CD4-positive, alpha-beta memory T cell (primary cell): ENCODE measurements at regions of chr14 and their contacts with region 1.

Region 1: DNA sequence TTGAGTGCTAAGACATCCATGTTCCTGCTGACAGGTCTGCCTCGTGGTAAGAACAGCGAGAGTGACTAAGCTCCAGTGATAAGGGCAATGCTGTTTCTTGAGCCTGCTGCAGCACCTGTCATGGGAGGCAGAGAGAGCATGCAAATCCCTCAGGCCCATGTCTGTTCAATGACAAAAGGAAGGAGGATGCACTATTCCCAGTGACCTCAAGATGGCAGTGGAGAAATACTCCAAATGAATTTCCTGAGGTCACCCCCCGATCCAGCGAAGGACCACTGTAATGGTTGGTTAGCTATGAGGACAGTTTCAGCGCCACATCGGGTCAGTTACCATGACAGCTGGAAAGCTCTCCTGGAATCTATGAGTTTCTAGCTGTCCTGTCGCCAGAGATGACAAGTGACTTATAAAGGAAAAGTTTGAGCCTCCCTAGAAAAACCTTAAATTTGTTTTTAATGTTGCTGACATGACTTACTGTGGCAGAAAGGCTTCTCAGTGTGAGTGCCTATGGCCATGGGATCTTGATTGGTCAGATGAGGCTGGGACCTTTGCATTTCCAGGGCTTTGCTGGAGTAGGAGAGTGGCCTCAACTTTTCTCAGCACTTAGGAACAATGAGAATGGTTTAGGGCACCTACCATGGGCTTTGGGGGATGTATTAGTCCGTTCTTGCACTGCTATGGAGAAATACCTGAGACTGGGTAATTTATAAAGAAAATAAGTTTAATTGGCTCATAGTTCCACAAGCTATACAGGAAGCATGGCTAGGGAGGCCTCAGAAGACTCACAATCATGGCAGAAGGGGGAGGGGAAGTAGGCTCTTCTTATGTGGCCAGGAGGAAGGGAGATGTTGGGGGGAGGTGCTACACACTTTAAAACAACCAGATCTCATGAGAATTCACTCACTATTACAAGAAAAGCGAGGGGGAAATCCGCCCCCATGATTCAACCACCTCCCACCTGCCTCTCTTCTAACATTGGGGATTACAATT is 88.0 kb upstream of the TMEM260 start:
- DNase-seq: peak in 4 of 5 donors; percentile 9 to 29 (median 12)
- H3K4me3 ChIP-seq: no peak overlapping the region
- H3K4me3 Mint-ChIP-seq: peak overlapping the region in 5 of 8 donors; percentile 29 to 58 (median 33)
- H3K27ac ChIP-seq: no peak overlapping the region
- H3K27ac Mint-ChIP-seq: no peak overlapping the region
- H3K4me1 ChIP-seq: peaks cover 6% of the 10 kb centered on the region
- H3K4me1 Mint-ChIP-seq: peaks cover 4 to 6% (median 5%) of the 10 kb centered on the region in 4 donors
- H3K27me3 ChIP-seq: no peaks in the 10 kb centered on the region
- H3K27me3 Mint-ChIP-seq: peaks cover 0 to 1% of the 10 kb centered on the region in 2 donors

Region 2: DNA sequence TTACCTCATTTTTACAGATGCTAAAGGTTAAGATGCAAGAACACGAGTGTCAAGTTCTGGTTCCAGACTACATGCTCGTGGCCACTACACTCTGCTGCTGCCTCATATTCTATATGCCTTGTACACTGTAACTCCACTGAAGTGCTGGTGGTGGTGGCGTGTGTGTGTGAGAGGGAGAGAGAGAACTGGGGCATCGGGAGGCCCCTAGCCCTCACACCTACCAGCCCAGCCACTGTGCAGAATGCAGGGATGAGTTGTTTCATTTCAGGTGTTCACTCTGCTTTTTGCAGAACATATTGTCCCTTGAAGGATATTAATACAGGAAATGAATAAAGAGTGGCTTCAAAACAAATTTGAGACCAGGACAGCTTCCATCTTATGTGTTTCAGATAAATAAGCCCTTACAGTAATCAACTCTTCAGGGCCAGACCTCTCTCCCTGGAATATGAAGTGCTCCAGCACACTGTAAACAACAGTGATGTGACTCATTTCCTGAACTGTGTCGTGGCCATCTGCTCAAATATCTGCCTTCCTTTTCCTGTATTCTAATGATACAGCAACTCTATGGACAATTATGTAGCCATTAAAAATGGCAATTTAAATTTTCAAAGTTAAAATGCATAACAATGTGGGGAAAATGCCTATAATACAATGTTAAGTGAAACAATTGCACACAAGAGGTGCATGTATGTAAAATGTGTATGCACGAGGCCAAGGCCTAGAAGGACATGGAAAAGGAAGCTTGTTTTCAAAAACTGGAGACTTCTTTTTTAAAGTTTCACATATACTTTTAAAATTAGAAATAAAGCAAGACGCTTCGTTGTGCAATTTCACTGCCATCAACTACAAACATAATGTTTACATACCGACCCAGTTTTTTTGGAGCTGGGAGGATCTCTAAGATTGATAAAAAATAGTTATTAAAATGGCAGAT is 158.0 kb before region 1 on chr14:
- CTCF ChIA-PET with region 1: no interaction called
- POLR2A ChIA-PET with region 1: no interaction called
- intact Hi-C with region 1: no loop called
- DNase-seq: no peak
- H3K4me3 ChIP-seq: no peak overlapping the region
- H3K4me3 Mint-ChIP-seq: no peak overlapping the region
- H3K27ac ChIP-seq: no peak overlapping the region
- H3K27ac Mint-ChIP-seq: peak overlapping the region in 2 of 7 donors; percentile 52 to 66
- H3K4me1 ChIP-seq: no peaks in the 10 kb centered on the region
- H3K4me1 Mint-ChIP-seq: peaks cover 3 to 10% (median 6%) of the 10 kb centered on the region in 4 donors
- H3K27me3 ChIP-seq: no peaks in the 10 kb centered on the region
- H3K27me3 Mint-ChIP-seq: no peaks in the 10 kb centered on the region

Region 3: DNA sequence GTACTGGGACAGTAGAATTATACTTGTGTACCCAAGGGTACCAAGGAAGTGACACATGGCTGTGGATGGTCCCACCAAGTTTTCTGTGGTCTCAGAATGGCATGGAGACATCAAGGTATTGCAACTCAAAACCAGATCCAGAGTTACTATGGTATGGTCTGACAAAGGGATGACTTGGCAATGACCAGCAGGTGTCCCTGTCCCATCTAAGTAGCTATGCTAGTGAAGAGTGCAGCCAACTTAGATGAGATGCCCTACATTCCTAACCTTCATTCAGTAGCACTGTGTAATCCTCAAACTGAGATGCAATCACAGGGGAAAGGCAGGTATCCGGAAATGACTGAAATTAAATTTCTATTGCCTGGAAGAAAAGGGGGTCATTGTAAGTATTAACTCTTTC is 100.7 kb before region 1 on chr14:
- CTCF ChIA-PET with region 1: no interaction called
- POLR2A ChIA-PET with region 1: no interaction called
- intact Hi-C with region 1: no loop called
- DNase-seq: no peak
- H3K4me3 ChIP-seq: no peak overlapping the region
- H3K4me3 Mint-ChIP-seq: no peak overlapping the region
- H3K27ac ChIP-seq: no peak overlapping the region
- H3K27ac Mint-ChIP-seq: no peak overlapping the region
- H3K4me1 ChIP-seq: no peaks in the 10 kb centered on the region
- H3K4me1 Mint-ChIP-seq: no peaks in the 10 kb centered on the region
- H3K27me3 ChIP-seq: no peaks in the 10 kb centered on the region
- H3K27me3 Mint-ChIP-seq: peaks cover 0 to 6% of the 10 kb centered on the region in 2 donors

Region 4: DNA sequence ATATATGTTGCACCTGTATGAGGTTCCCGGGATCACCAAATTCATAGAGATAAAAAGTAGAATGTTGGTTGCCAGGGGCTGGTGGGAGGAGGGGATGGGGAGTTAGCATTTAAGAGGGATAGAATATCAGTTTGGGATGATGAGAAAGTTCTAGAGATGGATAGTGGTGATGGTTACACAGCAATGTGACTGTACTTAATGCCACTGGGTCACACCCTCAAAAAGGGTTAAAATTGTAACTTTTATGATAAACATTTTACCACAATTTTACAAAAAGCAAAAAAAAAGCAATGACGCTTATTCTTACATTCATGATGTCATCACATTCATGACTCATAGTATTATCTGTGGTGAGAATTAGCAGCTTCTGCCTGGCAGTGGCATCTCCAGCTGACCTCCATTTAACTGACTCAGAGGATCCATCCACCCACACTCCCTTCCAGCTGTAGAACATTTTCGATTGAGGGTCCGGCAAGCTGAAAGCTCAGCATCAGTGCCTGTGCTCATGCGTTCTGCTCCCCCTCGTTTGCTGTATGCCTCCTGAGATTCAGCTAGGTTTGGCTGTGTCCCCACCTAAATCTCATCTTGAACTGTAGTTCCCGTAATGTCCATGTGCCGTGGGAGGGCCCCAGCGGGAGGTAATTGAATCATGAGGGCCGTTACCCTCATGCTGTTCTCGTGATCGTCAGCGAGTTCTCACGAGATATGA is 23.2 kb after region 1 on chr14:
- CTCF ChIA-PET with region 1: interaction called, 10 read pairs
- POLR2A ChIA-PET with region 1: no interaction called
- intact Hi-C with region 1: no loop called
- DNase-seq: no peak
- H3K4me3 ChIP-seq: no peak overlapping the region
- H3K4me3 Mint-ChIP-seq: no peak overlapping the region
- H3K27ac ChIP-seq: no peak overlapping the region
- H3K27ac Mint-ChIP-seq: no peak overlapping the region
- H3K4me1 ChIP-seq: no peaks in the 10 kb centered on the region
- H3K4me1 Mint-ChIP-seq: no peaks in the 10 kb centered on the region
- H3K27me3 ChIP-seq: no peaks in the 10 kb centered on the region
- H3K27me3 Mint-ChIP-seq: peaks cover 9 to 10% of the 10 kb centered on the region in 2 donors

Region 5: GRCh38 chr14:56579345-56580220 is 88.0 kb after region 1 on chr14 and contains the start of gene TMEM260:
- CTCF ChIA-PET with region 1: interaction called, 11 read pairs
- POLR2A ChIA-PET with region 1: no interaction called
- intact Hi-C with region 1: no loop called
- DNase-seq: peak; percentile 90 to 94 (median 93)
- H3K4me3 ChIP-seq: peak within 1 kb of the TSS; percentile 92 to 94
- H3K4me3 Mint-ChIP-seq: peak within 1 kb of the TSS; percentile 90 to 99 (median 92)
- H3K27ac ChIP-seq: peak within 1 kb of the TSS; percentile 83
- H3K27ac Mint-ChIP-seq: peak within 1 kb of the TSS in 6 of 7 donors; percentile 91 to 99 (median 97)
- H3K4me1 ChIP-seq: peaks cover 41% of the 10 kb centered on the region
- H3K4me1 Mint-ChIP-seq: peaks cover 30 to 48% (median 35%) of the 10 kb centered on the region in 4 donors
- H3K27me3 ChIP-seq: no peaks in the 10 kb centered on the region
- H3K27me3 Mint-ChIP-seq: no peaks in the 10 kb centered on the region
- total RNA-seq, gene TMEM260: 33.6 to 37.0 TPM

Region 6: GRCh38 chr14:56648508-56649301 is 157.1 kb after region 1 on chr14:
- CTCF ChIA-PET with region 1: no interaction called
- POLR2A ChIA-PET with region 1: no interaction called
- intact Hi-C with region 1: no loop called
- DNase-seq: no peak
- H3K4me3 ChIP-seq: no peak overlapping the region
- H3K4me3 Mint-ChIP-seq: no peak overlapping the region
- H3K27ac ChIP-seq: no peak overlapping the region
- H3K27ac Mint-ChIP-seq: peak overlapping the region in 1 of 7 donors; percentile 40
- H3K4me1 ChIP-seq: no peaks in the 10 kb centered on the region
- H3K4me1 Mint-ChIP-seq: no peaks in the 10 kb centered on the region
- H3K27me3 ChIP-seq: no peaks in the 10 kb centered on the region
- H3K27me3 Mint-ChIP-seq: no peaks in the 10 kb centered on the region

Region 7: GRCh38 chr14:57205938-57206337 is 714.3 kb after region 1 on chr14:
- CTCF ChIA-PET with region 1: interaction called, 8 read pairs
- POLR2A ChIA-PET with region 1: no interaction called
- intact Hi-C with region 1: loop called (anchors 2 kb)
- DNase-seq: no peak
- H3K4me3 ChIP-seq: no peak overlapping the region
- H3K4me3 Mint-ChIP-seq: no peak overlapping the region
- H3K27ac ChIP-seq: no peak overlapping the region
- H3K27ac Mint-ChIP-seq: no peak overlapping the region
- H3K4me1 ChIP-seq: no peaks in the 10 kb centered on the region
- H3K4me1 Mint-ChIP-seq: no peaks in the 10 kb centered on the region
- H3K27me3 ChIP-seq: no peaks in the 10 kb centered on the region
- H3K27me3 Mint-ChIP-seq: no peaks in the 10 kb centered on the region

Region 8: GRCh38 chr14:57293866-57294837 is 802.6 kb after region 1 on chr14:
- CTCF ChIA-PET with region 1: interaction called, 8 read pairs
- POLR2A ChIA-PET with region 1: no interaction called
- intact Hi-C with region 1: loop called (anchors 1 kb)
- DNase-seq: peak in 1 of 5 donors; percentile 4
- H3K4me3 ChIP-seq: no peak overlapping the region
- H3K4me3 Mint-ChIP-seq: no peak overlapping the region
- H3K27ac ChIP-seq: no peak overlapping the region
- H3K27ac Mint-ChIP-seq: no peak overlapping the region
- H3K4me1 ChIP-seq: no peaks in the 10 kb centered on the region
- H3K4me1 Mint-ChIP-seq: no peaks in the 10 kb centered on the region
- H3K27me3 ChIP-seq: no peaks in the 10 kb centered on the region
- H3K27me3 Mint-ChIP-seq: no peaks in the 10 kb centered on the region

Region 9: GRCh38 chr14:57317316-57317715 is 825.7 kb after region 1 on chr14:
- CTCF ChIA-PET with region 1: interaction called, 49 read pairs
- POLR2A ChIA-PET with region 1: no interaction called
- intact Hi-C with region 1: no loop called
- DNase-seq: peak; percentile 65 to 73 (median 69)
- H3K4me3 ChIP-seq: no peak overlapping the region
- H3K4me3 Mint-ChIP-seq: no peak overlapping the region
- H3K27ac ChIP-seq: no peak overlapping the region
- H3K27ac Mint-ChIP-seq: no peak overlapping the region
- H3K4me1 ChIP-seq: no peaks in the 10 kb centered on the region
- H3K4me1 Mint-ChIP-seq: peaks cover 0 to 6% (median 4%) of the 10 kb centered on the region in 4 donors
- H3K27me3 ChIP-seq: no peaks in the 10 kb centered on the region
- H3K27me3 Mint-ChIP-seq: peaks cover 2 to 8% of the 10 kb centered on the region in 2 donors